B cell (primary cell): ENCODE measurements at regions of chr20 and their contacts with region 1.

Region 1: GRCh38 chr20:46406199-46406985 is at the start of gene ELMO2:
- DNase-seq: peak; percentile 96
- ATAC-seq: peak; percentile 90
- H3K4me3 ChIP-seq: peak within 1 kb of the TSS; percentile 71 to 91 (median 87)
- H3K4me3 Mint-ChIP-seq: peak within 1 kb of the TSS; percentile 97
- H3K27ac ChIP-seq: peak within 1 kb of the TSS; percentile 63 to 91
- H3K27ac Mint-ChIP-seq: peak within 1 kb of the TSS; percentile 95
- H3K4me1 ChIP-seq: peaks cover 20 to 37% of the 10 kb centered on the region in 2 donors
- H3K4me1 Mint-ChIP-seq: peaks cover 50% of the 10 kb centered on the region
- H3K27me3 ChIP-seq: no peaks in the 10 kb centered on the region
- H3K27me3 Mint-ChIP-seq: no peaks in the 10 kb centered on the region
- CTCF ChIP-seq: no peak
- total RNA-seq, gene ELMO2: 41.7 and 43.7 TPM in 2 replicates

Region 2: GRCh38 chr20:46013826-46014516 is 392.4 kb before region 1 on chr20:
- CTCF ChIA-PET with region 1: interaction called, 16 read pairs
- POLR2A ChIA-PET with region 1: no interaction called
- intact Hi-C with region 1: loop called (anchors 2 kb)
- DNase-seq: peak; percentile 87
- ATAC-seq: peak; percentile 88
- H3K4me3 ChIP-seq: peak overlapping the region in 4 of 5 experiments; percentile 19 to 47 (median 35)
- H3K4me3 Mint-ChIP-seq: peak overlapping the region; percentile 72
- H3K27ac ChIP-seq: no peak overlapping the region
- H3K27ac Mint-ChIP-seq: peak overlapping the region; percentile 63
- H3K4me1 ChIP-seq: peaks cover 48 to 49% of the 10 kb centered on the region in 2 donors
- H3K4me1 Mint-ChIP-seq: peaks cover 49% of the 10 kb centered on the region
- H3K27me3 ChIP-seq: peaks cover 0 to 57% (median 29%) of the 10 kb centered on the region in 4 experiments
- H3K27me3 Mint-ChIP-seq: peaks cover 59% of the 10 kb centered on the region
- CTCF ChIP-seq: peak; percentile 89

Region 3: GRCh38 chr20:46060301-46060881 is 346.0 kb before region 1 on chr20:
- CTCF ChIA-PET with region 1: no interaction called
- POLR2A ChIA-PET with region 1: no interaction called
- intact Hi-C with region 1: loop called (anchors 1 kb)
- DNase-seq: peak; percentile 28
- ATAC-seq: no peak
- H3K4me3 ChIP-seq: no peak overlapping the region
- H3K4me3 Mint-ChIP-seq: peak overlapping the region; percentile 33
- H3K27ac ChIP-seq: no peak overlapping the region
- H3K27ac Mint-ChIP-seq: no peak overlapping the region
- H3K4me1 ChIP-seq: peaks cover 39 to 44% of the 10 kb centered on the region in 2 donors
- H3K4me1 Mint-ChIP-seq: peaks cover 41% of the 10 kb centered on the region
- H3K27me3 ChIP-seq: peaks cover 0 to 42% (median 9%) of the 10 kb centered on the region in 4 experiments
- H3K27me3 Mint-ChIP-seq: peaks cover 27% of the 10 kb centered on the region
- CTCF ChIP-seq: no peak

Region 4: DNA sequence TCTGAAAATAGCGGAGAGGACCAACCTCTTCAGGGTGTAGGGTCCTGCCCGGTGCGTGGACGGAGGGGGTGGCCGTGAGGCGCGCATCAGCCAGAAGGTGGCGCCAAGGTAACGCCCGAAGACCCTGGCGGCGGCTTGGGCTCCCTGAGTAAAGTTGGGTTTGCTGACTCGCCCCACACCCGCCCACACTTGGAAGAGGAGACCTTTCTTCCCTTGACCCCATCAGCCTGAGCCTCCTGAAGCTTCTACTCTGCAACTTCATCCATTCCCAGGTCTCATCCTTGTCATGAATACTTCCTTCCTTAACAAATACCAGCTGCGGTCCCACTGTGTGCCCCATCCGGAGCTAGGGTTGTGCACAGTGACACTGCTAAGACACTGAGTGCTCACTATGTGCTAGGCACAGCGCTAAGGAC is 273.7 kb before region 1 on chr20:
- CTCF ChIA-PET with region 1: interaction called, 14 read pairs
- POLR2A ChIA-PET with region 1: no interaction called
- intact Hi-C with region 1: loop called (anchors 1 kb)
- DNase-seq: peak; percentile 78
- ATAC-seq: peak; percentile 83
- H3K4me3 ChIP-seq: no peak overlapping the region
- H3K4me3 Mint-ChIP-seq: peak overlapping the region; percentile 4
- H3K27ac ChIP-seq: no peak overlapping the region
- H3K27ac Mint-ChIP-seq: peak overlapping the region; percentile 33
- H3K4me1 ChIP-seq: peaks cover 20 to 42% of the 10 kb centered on the region in 2 donors
- H3K4me1 Mint-ChIP-seq: peaks cover 48% of the 10 kb centered on the region
- H3K27me3 ChIP-seq: peaks cover 0 to 10% (median 0%) of the 10 kb centered on the region in 4 experiments
- H3K27me3 Mint-ChIP-seq: peaks cover 15% of the 10 kb centered on the region
- CTCF ChIP-seq: peak; percentile 87

Region 5: GRCh38 chr20:46307139-46307998 is 99.0 kb before region 1 on chr20:
- CTCF ChIA-PET with region 1: interaction called, 15 read pairs
- POLR2A ChIA-PET with region 1: no interaction called
- intact Hi-C with region 1: loop called (anchors 1 kb)
- DNase-seq: peak; percentile 79
- ATAC-seq: peak; percentile 85
- H3K4me3 ChIP-seq: peak overlapping the region in 4 of 5 experiments; percentile 19 to 52 (median 42)
- H3K4me3 Mint-ChIP-seq: peak overlapping the region; percentile 76
- H3K27ac ChIP-seq: no peak overlapping the region
- H3K27ac Mint-ChIP-seq: no peak overlapping the region
- H3K4me1 ChIP-seq: peaks cover 14 to 19% of the 10 kb centered on the region in 2 donors
- H3K4me1 Mint-ChIP-seq: peaks cover 14% of the 10 kb centered on the region
- H3K27me3 ChIP-seq: peaks cover 0 to 72% (median 41%) of the 10 kb centered on the region in 4 experiments
- H3K27me3 Mint-ChIP-seq: peaks cover 75% of the 10 kb centered on the region
- CTCF ChIP-seq: peak; percentile 86

Region 6: DNA sequence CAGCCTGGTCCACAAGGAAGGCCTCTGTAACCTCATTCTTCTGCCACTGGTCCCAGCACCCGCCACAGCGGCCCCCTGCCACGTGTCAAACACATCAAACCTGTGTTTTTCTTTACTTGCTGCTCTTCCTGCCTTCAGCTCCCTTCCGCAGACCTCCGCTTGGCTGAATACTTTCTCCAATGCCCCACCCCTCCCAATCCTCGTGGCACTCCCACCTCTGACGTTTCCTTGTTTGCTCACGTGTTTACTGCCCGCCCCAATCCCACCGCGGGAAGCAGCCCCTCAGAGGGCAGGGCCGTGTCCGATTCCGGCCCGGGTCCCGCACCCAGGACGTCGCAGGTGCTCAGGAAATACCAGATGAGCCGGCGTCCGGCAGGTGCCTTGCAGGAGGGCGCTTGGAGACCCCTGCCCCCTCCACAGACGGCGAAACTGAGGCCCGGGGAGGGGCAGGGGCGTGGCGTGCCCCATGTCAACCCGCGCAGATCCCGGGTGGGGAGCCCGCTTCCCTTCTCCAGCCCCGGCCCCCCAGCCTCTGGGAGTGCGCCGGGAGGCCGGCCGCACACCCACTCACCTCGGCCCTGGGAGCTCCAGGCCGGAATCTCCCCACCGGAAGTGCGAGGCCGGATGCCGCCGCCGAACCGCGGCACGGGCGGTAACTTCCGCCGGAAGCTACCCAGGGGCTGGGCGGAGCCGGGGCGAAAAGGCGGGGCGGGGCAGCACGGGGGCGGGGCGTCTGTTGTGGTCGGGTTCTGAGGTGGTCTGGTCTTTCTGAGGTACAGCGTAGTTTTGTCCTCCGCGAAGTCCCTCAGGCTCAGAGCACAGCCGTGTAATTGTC is 42.4 kb before region 1 on chr20:
- CTCF ChIA-PET with region 1: interaction called, 18 read pairs
- POLR2A ChIA-PET with region 1: interaction called, 7 read pairs
- intact Hi-C with region 1: loop called (anchors 1 kb)
- DNase-seq: peak; percentile 91
- ATAC-seq: peak; percentile 84
- H3K4me3 ChIP-seq: peak overlapping the region; percentile 64 to 97 (median 95)
- H3K4me3 Mint-ChIP-seq: peak overlapping the region; percentile 91
- H3K27ac ChIP-seq: peak overlapping the region; percentile 98 to 100
- H3K27ac Mint-ChIP-seq: peak overlapping the region; percentile 83
- H3K4me1 ChIP-seq: peaks cover 38 to 48% of the 10 kb centered on the region in 2 donors
- H3K4me1 Mint-ChIP-seq: peaks cover 48% of the 10 kb centered on the region
- H3K27me3 ChIP-seq: no peaks in the 10 kb centered on the region
- H3K27me3 Mint-ChIP-seq: no peaks in the 10 kb centered on the region
- CTCF ChIP-seq: no peak

Region 7: DNA sequence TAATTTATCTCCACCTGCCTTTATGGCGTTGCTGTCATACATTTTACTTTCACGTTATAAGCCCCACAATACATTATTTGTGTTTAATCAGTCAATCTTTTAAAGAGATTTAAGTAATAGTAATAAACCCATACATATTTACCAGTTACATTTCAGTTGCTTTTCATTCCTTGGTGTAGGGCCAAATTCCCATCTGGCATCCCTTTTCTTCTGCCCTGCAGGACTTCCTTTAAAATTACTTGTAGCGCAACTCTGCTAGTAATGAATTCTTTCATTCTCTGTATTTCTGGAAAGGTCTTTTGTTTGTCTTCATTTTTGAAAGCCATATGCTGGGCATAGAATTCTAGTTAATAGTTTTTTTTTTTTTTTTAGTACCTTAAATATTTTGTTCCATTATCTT is 82.1 kb after region 1 on chr20:
- CTCF ChIA-PET with region 1: no interaction called
- POLR2A ChIA-PET with region 1: no interaction called
- intact Hi-C with region 1: no loop called
- DNase-seq: no peak
- ATAC-seq: no peak
- H3K4me3 ChIP-seq: no peak overlapping the region
- H3K4me3 Mint-ChIP-seq: no peak overlapping the region
- H3K27ac ChIP-seq: no peak overlapping the region
- H3K27ac Mint-ChIP-seq: no peak overlapping the region
- H3K4me1 ChIP-seq: no peaks in the 10 kb centered on the region
- H3K4me1 Mint-ChIP-seq: no peaks in the 10 kb centered on the region
- H3K27me3 ChIP-seq: peaks cover 0 to 25% (median 9%) of the 10 kb centered on the region in 4 experiments
- H3K27me3 Mint-ChIP-seq: peaks cover 50% of the 10 kb centered on the region
- CTCF ChIP-seq: no peak

Region 8: GRCh38 chr20:46689082-46689754 is 282.8 kb after region 1 on chr20 and contains the start of gene TP53RK:
- CTCF ChIA-PET with region 1: interaction called, 3 read pairs
- POLR2A ChIA-PET with region 1: no interaction called
- intact Hi-C with region 1: loop called (anchors 1 kb)
- DNase-seq: peak; percentile 97
- ATAC-seq: peak; percentile 97
- H3K4me3 ChIP-seq: peak within 1 kb of the TSS; percentile 87 to 95 (median 93)
- H3K4me3 Mint-ChIP-seq: peak within 1 kb of the TSS; percentile 99
- H3K27ac ChIP-seq: peak within 1 kb of the TSS; percentile 76 to 80
- H3K27ac Mint-ChIP-seq: peak within 1 kb of the TSS; percentile 98
- H3K4me1 ChIP-seq: peaks cover 20 to 21% of the 10 kb centered on the region in 2 donors
- H3K4me1 Mint-ChIP-seq: peaks cover 40% of the 10 kb centered on the region
- H3K27me3 ChIP-seq: no peaks in the 10 kb centered on the region
- H3K27me3 Mint-ChIP-seq: no peaks in the 10 kb centered on the region
- CTCF ChIP-seq: peak; percentile 34
- total RNA-seq, gene TP53RK: 22.5 and 24.0 TPM in 2 replicates